ENCODE measurements at regions of chr3 and their contacts with region 1.

Region 1: DNA sequence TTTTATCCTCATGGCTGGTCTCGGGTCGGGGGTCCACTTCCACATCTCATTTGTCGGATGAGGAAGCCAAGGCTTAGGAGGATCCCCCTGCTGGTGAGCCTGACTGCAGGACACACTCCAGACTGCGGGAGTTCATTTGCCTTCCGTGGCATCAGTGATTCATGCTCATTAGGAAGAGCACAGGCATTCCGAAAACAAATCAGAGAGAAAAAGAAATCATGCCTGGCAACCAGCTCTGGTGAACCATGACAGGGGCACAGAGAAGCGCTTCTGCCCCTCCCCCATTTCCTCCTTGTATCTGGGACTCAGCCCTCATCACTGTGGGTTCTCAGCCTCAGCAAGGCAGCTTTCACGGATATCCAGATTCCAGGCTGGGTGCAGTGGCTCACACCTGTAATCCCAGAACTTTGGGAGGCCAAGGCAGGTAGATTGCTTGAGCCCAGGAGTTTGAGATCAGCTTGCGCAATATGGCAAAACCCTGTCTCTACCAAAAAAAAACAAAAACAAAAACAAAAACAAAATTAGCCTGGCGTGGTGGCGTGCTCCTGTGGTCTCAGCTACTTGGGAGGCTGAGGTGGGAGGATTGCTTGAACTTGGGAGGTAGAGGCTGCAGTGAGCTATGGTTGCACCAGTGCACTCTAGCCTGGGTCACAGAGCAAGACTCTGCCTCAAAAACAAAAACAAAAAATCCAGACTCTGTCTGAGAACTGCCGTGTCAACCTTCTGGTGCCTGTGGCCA is 28.4 kb downstream of the IRAK2 start:
- DNase-seq: peak; percentile 77
- H3K4me3 Mint-ChIP-seq: peak overlapping the region; percentile 37
- H3K27ac Mint-ChIP-seq: peak overlapping the region; percentile 99
- H3K4me1 Mint-ChIP-seq: peaks cover 91% of the 10 kb centered on the region
- H3K27me3 Mint-ChIP-seq: no peaks in the 10 kb centered on the region

Region 2: GRCh38 chr3:10055097-10055496 is 138.0 kb before region 1 on chr3:
- CTCF ChIA-PET with region 1: no interaction called
- DNase-seq: no peak
- H3K4me3 Mint-ChIP-seq: no peak overlapping the region
- H3K27ac Mint-ChIP-seq: no peak overlapping the region
- H3K4me1 Mint-ChIP-seq: no peaks in the 10 kb centered on the region
- H3K27me3 Mint-ChIP-seq: no peaks in the 10 kb centered on the region

Region 3: GRCh38 chr3:10164546-10165393 is 28.4 kb before region 1 on chr3 and contains the start of gene IRAK2:
- CTCF ChIA-PET with region 1: interaction called, 14 read pairs
- DNase-seq: peak; percentile 71
- H3K4me3 Mint-ChIP-seq: peak within 1 kb of the TSS; percentile 73
- H3K27ac Mint-ChIP-seq: no peak within 1 kb of the TSS
- H3K4me1 Mint-ChIP-seq: peaks cover 35% of the 10 kb centered on the region
- H3K27me3 Mint-ChIP-seq: peaks cover 16% of the 10 kb centered on the region

Region 4: GRCh38 chr3:10408680-10409079 is 215.6 kb after region 1 on chr3:
- CTCF ChIA-PET with region 1: no interaction called
- DNase-seq: no peak
- H3K4me3 Mint-ChIP-seq: no peak overlapping the region
- H3K27ac Mint-ChIP-seq: no peak overlapping the region
- H3K4me1 Mint-ChIP-seq: no peaks in the 10 kb centered on the region
- H3K27me3 Mint-ChIP-seq: peaks cover 7% of the 10 kb centered on the region